HCT116 (cell line): ENCODE measurements at regions of chr16 and their contacts with region 1.

Region 1: DNA sequence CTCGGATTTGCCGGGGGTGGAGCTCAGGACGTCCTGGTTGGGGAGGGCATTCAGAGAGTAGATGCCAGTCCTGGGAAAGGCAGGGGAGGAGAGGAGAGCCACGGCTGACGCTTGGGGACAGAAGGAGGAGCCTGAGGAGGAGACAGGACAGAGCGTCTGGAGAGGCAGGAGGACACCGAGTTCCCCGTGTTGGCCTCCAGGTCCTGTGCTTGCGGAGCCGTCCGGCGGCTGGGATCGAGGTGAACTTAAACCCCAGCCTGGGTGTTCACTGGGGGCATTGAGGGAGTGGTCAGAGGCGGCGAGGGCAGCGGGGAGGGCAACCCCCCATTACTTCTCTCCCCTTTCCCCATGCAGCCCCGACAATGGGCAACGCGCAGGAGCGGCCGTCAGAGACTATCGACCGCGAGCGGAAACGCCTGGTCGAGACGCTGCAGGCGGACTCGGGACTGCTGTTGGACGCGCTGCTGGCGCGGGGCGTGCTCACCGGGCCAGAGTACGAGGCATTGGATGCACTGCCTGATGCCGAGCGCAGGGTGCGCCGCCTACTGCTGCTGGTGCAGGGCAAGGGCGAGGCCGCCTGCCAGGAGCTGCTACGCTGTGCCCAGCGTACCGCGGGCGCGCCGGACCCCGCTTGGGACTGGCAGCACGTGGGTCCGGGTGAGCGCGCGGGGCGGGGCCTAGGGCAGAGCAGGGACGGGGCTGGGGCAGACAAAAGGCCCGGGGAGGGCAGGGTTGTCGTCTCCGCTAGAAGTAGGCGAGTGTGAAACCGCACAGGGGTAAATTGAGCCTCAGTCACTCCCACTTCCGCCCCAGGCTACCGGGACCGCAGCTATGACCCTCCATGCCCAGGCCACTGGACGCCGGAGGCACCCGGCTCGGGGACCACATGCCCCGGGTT is 3.7 kb downstream of the NOL3 start:
- DNase-seq: no peak
- ATAC-seq: peak; percentile 63
- H3K4me3 ChIP-seq: peak overlapping the region; percentile 67 to 70
- H3K27ac ChIP-seq: peak overlapping the region; percentile 97
- H3K4me1 ChIP-seq: peaks cover 57 to 90% of the 10 kb centered on the region in 2 experiments
- H3K27me3 ChIP-seq: no peaks in the 10 kb centered on the region
- CTCF ChIP-seq: peak in 1 of 3 experiments; percentile 18; a peak in 2 of 6 replicates
- POLR2A ChIP-seq: no peak
- RAD21 ChIP-seq: no peak

Region 2: GRCh38 chr16:67141426-67141825 is 32.6 kb before region 1 on chr16:
- CTCF ChIA-PET with region 1: no interaction called
- POLR2A ChIA-PET with region 1: no interaction called
- RAD21 ChIA-PET with region 1: no interaction called
- intact Hi-C with region 1: no loop called
- DNase-seq: no peak
- ATAC-seq: no peak
- H3K4me3 ChIP-seq: no peak overlapping the region
- H3K27ac ChIP-seq: no peak overlapping the region
- H3K4me1 ChIP-seq: no peaks in the 10 kb centered on the region
- H3K27me3 ChIP-seq: no peaks in the 10 kb centered on the region
- CTCF ChIP-seq: no peak
- POLR2A ChIP-seq: no peak
- RAD21 ChIP-seq: no peak

Region 3: DNA sequence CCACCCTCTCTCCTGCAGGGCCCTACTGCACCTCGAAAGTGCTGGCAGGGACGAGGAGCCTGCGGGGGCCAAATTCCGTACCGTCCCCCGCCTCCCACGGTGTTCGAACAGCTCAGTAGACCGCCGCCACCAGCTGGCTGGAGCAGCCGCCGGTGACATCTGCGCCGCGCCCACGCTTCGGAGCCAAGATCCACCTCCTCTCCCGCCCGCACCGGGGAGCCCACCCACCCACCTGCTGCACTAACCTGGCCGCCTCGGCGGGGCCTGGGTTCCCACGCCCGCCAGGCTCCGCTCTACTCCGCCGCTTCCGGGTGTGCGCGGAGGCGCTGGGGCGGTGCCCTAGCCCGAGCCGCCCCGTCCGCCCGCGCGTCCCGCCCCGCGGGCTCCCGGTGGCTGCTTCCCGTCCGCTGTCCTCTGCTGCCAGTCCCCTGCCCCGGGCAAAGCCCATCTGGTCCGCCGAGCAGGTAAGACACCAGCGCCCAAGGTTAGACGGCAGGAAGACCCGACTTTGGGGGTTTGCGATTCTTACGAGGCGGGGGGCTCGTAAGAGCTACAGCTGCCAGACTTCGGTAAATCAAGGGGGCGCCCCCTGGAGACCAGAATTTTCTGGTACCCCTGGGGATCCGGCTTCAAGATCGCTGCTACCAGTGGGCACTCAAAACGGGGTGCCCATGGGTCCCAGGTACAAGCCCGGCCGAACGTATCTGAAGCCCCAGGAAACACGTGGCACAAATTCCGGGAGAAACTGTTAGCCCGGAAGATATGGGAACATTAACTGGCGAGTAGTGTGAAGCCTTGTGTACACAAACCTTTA is 14.3 kb before region 1 on chr16 and contains the starts of genes FBXL8 and TRADD:
- CTCF ChIA-PET with region 1: interaction called, 52 read pairs
- POLR2A ChIA-PET with region 1: interaction called, 17 read pairs
- RAD21 ChIA-PET with region 1: no interaction called
- intact Hi-C with region 1: no loop called
- DNase-seq: no peak
- ATAC-seq: peak; percentile 74
- H3K4me3 ChIP-seq: peak within 1 kb of the TSS; percentile 80 to 98
- H3K27ac ChIP-seq: peak within 1 kb of the TSS; percentile 69
- H3K4me1 ChIP-seq: peaks cover 18 to 44% of the 10 kb centered on the region in 2 experiments
- H3K27me3 ChIP-seq: no peaks in the 10 kb centered on the region
- CTCF ChIP-seq: peak in 2 of 3 experiments; percentile 44 to 51; a peak in 5 of 6 replicates
- POLR2A ChIP-seq: no peak
- RAD21 ChIP-seq: no peak
- total RNA-seq, gene FBXL8: 27.8 TPM
- total RNA-seq, gene TRADD: 20.5 TPM

Region 4: DNA sequence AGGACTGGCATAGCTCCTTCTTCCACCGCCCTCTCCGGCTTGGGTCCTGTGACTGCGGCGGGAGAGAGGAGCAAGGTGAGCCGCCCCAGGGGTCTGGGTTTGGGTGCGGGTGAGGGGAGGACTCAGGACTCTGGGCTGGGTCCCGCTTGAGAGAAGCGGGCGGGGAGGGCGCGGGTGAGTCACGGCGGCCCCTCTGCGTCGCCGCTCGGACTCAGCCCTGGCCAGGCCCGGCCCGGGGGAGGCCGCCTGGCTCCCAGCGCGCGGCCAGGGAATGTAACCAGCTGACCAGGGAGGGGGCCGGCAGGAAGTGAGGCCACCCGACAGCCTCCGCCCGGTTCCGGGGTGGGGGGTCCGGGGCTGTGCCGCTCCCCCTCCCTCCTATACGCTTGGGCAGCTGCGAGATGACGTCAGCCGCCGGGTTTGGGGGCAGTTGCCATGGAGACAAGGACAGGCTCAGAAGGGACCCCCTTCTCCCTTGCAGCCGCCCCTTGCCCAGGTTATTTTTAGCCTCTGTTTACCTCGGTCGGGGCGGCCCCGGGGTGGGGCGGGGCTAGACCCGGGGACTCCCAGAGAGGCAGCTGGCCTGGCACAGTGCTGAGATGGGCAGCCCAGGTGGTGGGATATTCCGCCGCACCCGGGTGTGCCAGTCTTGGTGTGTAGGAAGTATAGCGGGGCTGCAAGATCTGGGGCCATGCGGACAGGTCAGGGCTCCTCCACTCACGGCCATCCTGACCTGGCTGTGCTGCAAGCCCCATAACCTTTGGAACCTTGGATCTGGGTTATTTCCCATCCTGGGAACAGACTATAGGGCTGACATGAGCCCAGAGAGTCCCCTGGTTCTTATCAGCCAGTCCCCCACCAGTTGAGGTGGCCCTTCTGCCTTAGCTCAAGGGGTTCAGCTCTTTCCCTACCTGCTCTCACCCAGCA is 356.2 kb after region 1 on chr16:
- CTCF ChIA-PET with region 1: no interaction called
- POLR2A ChIA-PET with region 1: no interaction called
- RAD21 ChIA-PET with region 1: no interaction called
- intact Hi-C with region 1: no loop called
- DNase-seq: no peak
- ATAC-seq: peak; percentile 25
- H3K4me3 ChIP-seq: peak overlapping the region; percentile 77 to 91
- H3K27ac ChIP-seq: peak overlapping the region; percentile 90
- H3K4me1 ChIP-seq: peaks cover 17 to 55% of the 10 kb centered on the region in 2 experiments
- H3K27me3 ChIP-seq: no peaks in the 10 kb centered on the region
- CTCF ChIP-seq: no peak
- POLR2A ChIP-seq: no peak
- RAD21 ChIP-seq: no peak